Activated naive CD4-positive, alpha-beta T cell treated with anti-CD3 and anti-CD28 coated beads for 36 hours (primary cell): ENCODE measurements at regions of chr2 and their contacts with region 1.

Region 1: DNA sequence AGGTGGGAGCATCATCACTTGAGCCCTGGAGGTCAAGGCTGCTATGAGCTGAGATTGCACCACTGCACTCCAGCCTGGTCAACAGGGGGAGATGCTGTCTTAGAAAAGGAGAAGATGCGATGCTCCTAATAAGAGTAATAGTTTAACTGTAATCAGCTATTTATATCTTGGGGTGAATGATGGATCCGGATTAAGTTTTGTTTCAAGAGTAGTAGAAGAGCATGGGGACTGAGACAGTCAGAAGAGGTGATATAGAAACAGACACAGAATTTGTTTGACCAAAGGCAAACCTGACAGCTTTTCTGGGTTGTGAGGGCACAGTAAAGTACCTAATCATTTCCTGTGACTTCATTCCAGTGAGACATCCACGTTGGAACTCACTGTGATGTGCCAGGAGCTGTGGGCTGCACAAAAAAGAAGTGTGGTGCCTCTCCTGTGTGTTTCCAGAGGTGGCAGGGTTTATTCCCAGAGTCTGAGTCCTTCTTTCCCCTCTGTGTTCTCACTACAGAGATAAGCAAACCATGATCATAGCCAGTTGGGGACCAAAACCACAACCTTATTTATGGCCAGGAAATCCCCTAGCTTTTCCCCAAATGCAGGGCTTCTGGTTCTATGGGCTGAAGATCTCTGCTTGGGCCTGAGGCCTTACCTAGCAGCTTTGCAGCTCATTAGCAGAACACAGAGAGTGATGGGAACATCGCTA is 113.7 kb downstream of the XRCC5 start:
- DNase-seq: peak; percentile 56
- H3K4me3 Mint-ChIP-seq: no peak overlapping the region
- H3K27ac Mint-ChIP-seq: peak overlapping the region; percentile 41
- H3K4me1 Mint-ChIP-seq: peaks cover 28% of the 10 kb centered on the region
- H3K27me3 Mint-ChIP-seq: no peaks in the 10 kb centered on the region

Region 2: GRCh38 chr2:216283038-216283900 is 60.5 kb after region 1 on chr2:
- CTCF ChIA-PET with region 1: no interaction called
- intact Hi-C with region 1: loop called (anchors 5 kb)
- DNase-seq: peak; percentile 35
- H3K4me3 Mint-ChIP-seq: no peak overlapping the region
- H3K27ac Mint-ChIP-seq: no peak overlapping the region
- H3K4me1 Mint-ChIP-seq: peaks cover 2% of the 10 kb centered on the region
- H3K27me3 Mint-ChIP-seq: no peaks in the 10 kb centered on the region

Region 3: GRCh38 chr2:216478151-216478550 is 255.3 kb after region 1 on chr2:
- CTCF ChIA-PET with region 1: no interaction called
- intact Hi-C with region 1: loop called (anchors 5 kb)
- DNase-seq: peak; percentile 68
- H3K4me3 Mint-ChIP-seq: no peak overlapping the region
- H3K27ac Mint-ChIP-seq: no peak overlapping the region
- H3K4me1 Mint-ChIP-seq: peaks cover 23% of the 10 kb centered on the region
- H3K27me3 Mint-ChIP-seq: no peaks in the 10 kb centered on the region